ENCODE measurements at regions of chr9 and their contacts with region 1.

Region 1: DNA sequence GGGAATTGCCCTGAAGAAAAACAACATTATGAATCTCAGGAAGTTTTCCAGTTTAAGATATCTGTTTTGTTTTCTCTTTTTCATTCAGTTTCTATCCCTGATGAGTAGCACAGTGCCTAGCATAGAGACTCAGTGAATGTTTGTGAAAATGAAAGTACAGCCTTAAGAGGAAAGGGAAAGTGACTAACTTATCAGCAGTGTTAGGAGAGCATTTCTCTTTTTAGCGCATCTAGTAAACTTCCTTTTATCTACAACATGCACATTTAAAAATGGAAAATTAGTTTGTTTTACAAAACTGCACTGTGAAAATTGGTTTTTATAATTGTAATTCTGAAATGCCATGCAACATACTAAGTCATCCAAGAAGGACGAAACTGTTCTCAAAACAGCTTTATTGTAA is 110.8 kb downstream of the SMARCA2 start:
- DNase-seq: no peak
- ATAC-seq: peak; percentile 100
- H3K4me3 Mint-ChIP-seq: peak overlapping the region; percentile 22
- H3K27ac Mint-ChIP-seq: peak overlapping the region; percentile 87
- H3K4me1 Mint-ChIP-seq: peaks cover 39% of the 10 kb centered on the region
- H3K27me3 Mint-ChIP-seq: no peaks in the 10 kb centered on the region

Region 2: DNA sequence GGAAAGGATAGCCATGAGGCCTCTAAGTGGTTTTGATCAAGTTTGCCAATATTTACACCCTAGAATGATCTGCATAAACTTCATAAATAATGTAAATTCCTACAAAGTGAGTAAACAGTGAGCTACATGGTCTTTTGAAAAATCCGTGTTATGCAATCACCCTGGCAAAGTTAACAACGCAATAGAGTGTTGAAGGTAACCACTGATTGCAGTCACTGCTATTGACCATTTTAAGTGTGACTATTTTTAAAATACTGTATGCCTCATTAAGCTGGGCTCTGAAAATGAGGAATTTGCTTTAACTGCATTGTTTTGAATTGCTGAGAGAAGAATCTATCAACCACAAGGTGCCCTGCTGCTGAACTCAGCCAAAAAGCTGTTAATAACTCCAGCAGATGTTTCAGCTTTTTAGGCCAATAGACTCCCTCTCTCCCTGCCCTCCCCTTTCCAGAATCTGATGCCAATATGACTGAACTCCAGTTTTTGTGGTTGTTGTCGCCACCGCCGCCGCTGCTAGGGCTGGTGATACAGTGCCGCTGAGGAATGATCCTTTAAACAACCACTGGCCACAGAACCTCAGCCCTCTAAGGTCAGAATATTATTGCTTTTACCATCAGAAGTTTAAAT is 146.1 kb before region 1 on chr9:
- CTCF ChIA-PET with region 1: no interaction called
- POLR2A ChIA-PET with region 1: no interaction called
- intact Hi-C with region 1: no loop called
- DNase-seq: no peak
- ATAC-seq: no peak
- H3K4me3 Mint-ChIP-seq: no peak overlapping the region
- H3K27ac Mint-ChIP-seq: no peak overlapping the region
- H3K4me1 Mint-ChIP-seq: no peaks in the 10 kb centered on the region
- H3K27me3 Mint-ChIP-seq: no peaks in the 10 kb centered on the region

Region 3: DNA sequence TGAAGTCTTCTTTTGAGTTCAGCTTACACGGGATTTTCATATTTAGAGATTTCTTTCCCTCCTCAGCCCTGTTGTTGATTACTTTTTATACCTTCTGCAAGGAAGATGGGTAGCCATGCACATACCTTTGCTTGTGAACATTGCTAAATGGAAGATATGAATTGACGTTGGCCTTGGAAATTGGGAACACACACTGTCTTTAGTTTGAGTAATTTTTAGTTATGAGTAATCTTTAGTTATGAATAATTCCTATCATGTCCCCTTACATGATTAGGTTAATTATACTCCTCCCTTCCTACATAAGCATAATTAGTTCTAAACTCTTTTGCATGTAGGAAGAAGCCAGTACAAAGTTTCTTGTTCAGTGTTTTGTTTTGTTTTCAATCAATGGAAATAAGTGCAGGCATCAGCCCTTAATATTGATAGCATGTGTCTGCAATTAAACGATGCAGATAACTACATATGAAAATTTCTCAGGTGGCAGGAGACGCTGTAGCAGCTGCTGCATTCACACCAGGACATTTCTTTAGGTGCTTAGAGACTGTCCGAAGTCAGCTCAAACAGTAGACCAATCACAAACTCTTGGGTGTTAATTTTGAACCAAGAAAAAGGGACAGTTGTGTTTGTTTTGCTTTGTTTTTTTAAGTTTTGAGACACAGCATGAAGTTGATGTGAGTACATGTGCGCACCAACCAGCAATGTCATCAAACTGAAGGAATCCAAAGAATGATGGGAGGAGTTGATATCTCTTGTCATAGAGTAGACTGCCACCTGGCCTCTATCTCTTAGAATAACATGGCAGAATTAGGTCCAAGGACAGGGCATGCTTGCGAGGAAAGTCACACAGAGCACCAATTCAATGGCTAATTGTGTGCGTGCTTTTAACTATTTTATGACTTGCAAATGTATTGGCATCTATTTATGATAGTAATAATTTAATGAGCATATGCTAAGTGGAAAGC is 59.3 kb before region 1 on chr9:
- CTCF ChIA-PET with region 1: no interaction called
- POLR2A ChIA-PET with region 1: no interaction called
- intact Hi-C with region 1: loop called in 1 of 2 experiments (anchors 10 kb)
- DNase-seq: no peak
- ATAC-seq: peak; percentile 81
- H3K4me3 Mint-ChIP-seq: no peak overlapping the region
- H3K27ac Mint-ChIP-seq: peak overlapping the region; percentile 31
- H3K4me1 Mint-ChIP-seq: peaks cover 16% of the 10 kb centered on the region
- H3K27me3 Mint-ChIP-seq: no peaks in the 10 kb centered on the region